ENCODE measurements at regions of chr12 and their contacts with region 1.

Region 1: DNA sequence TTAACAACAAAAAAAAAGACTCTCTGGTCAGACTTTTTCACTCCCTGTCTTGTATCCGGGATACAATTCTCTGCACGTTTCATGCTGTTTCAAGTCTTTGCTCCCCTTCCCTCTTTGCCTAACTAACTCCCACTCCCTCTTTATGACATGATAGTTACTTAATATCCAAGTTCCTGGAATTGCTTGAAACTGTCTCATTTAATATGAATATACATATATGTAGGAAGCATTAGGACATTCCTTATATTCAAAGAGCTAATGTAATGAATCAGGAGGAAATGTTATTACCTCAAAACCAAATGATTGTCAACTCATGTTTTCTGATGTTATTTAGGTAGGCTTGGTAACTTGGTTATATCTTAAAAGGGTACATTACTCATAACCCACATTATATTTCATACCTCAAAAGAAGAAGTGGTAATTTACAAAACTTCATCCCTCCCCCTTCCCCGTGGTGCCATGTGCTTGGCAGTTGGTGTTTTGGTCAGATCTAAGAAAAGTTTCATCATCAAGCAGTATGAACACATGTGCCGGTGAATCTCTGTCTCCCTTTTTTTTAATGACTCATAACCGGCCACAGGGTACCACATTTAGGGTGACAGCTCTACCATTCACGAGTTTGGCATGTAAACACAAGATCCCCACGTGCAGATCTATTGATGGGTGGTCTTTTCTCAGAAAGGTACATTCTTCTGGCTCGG is 56.5 kb downstream of the HCAR2 start:
- DNase-seq: peak; percentile 31
- H3K4me3 Mint-ChIP-seq: peak overlapping the region; percentile 34
- H3K27ac Mint-ChIP-seq: peak overlapping the region; percentile 84
- H3K4me1 Mint-ChIP-seq: peaks cover 20% of the 10 kb centered on the region
- H3K27me3 Mint-ChIP-seq: no peaks in the 10 kb centered on the region

Region 2: DNA sequence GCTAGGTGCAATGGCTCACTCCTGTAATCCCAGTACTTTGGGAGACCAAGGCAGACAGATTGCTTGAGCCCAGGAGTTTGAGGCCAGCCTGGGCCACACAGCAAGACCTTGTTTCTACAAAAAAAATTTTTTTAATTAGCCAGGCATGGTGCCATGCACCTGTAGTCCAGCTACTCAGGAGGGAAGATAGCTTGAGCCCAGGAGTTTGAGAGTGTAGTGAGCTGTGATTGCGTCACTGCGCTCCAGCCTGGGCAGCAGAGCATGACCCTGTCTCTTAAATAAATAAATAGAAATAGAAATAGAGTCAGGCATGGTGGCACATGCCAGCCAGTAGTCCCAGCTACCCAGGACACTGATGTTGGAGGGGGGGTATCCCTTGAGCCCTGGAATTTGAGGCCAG is 187.5 kb before region 1 on chr12:
- intact Hi-C with region 1: no loop called
- DNase-seq: no peak
- H3K4me3 Mint-ChIP-seq: no peak overlapping the region
- H3K27ac Mint-ChIP-seq: no peak overlapping the region
- H3K4me1 Mint-ChIP-seq: peaks cover 11% of the 10 kb centered on the region
- H3K27me3 Mint-ChIP-seq: no peaks in the 10 kb centered on the region

Region 3: GRCh38 chr12:122721057-122721545 is 74.4 kb after region 1 on chr12:
- intact Hi-C with region 1: loop called (anchors 1 kb)
- DNase-seq: no peak
- H3K4me3 Mint-ChIP-seq: peak overlapping the region; percentile 45
- H3K27ac Mint-ChIP-seq: peak overlapping the region; percentile 86
- H3K4me1 Mint-ChIP-seq: peaks cover 40% of the 10 kb centered on the region
- H3K27me3 Mint-ChIP-seq: no peaks in the 10 kb centered on the region

Region 4: DNA sequence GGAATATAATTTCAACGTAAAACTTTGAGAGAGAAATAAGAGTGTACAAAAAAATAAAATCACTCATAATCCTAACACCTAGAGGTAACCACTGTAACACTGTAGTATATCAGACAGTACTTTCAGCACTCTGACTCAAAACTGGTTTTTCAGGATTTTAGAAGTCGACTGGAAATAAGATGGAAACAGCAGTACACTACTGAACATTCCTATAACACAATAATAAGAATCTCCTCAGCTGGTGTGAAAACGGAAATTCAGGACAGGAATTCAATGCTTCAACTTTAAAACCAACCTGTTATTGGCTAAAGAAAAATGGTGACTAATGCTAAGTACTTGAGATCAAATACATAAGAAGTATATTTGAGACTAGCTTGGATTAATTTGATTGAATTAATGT is 516.6 kb after region 1 on chr12:
- intact Hi-C with region 1: no loop called
- DNase-seq: no peak
- H3K4me3 Mint-ChIP-seq: no peak overlapping the region
- H3K27ac Mint-ChIP-seq: no peak overlapping the region
- H3K4me1 Mint-ChIP-seq: no peaks in the 10 kb centered on the region
- H3K27me3 Mint-ChIP-seq: no peaks in the 10 kb centered on the region